Endothelial cell of umbilical vein (primary cell): ENCODE measurements at regions of chr1 and their contacts with region 1.

Region 1: GRCh38 chr1:199084293-199084692 is 445.5 kb downstream of the PTPRC start:
- DNase-seq: no peak
- H3K4me3 ChIP-seq: no peak overlapping the region
- H3K27ac ChIP-seq: no peak overlapping the region
- H3K4me1 ChIP-seq: no peaks in the 10 kb centered on the region
- H3K27me3 ChIP-seq: no peaks in the 10 kb centered on the region
- CTCF ChIP-seq: no peak
- POLR2A ChIP-seq: no peak

Region 2: DNA sequence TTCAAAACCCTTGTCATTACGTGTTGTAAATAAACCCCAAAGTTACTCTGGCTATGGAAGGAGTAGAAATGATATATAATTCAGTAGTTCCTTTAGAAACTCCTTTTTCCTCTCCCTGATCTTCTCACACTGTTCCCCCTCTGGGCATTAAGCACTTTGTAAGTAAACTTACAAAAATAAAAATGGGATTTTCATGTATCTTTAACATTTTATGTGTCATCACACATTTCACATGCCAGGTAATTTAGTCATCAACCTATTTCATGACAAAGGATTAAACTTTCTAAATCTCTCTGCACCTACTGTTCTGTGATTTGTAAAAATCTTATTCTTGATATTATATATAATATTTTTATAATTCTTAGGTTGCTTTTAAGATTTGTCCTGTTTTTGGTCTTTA is 750.5 kb before region 1 on chr1:
- CTCF ChIA-PET with region 1: no interaction called
- POLR2A ChIA-PET with region 1: no interaction called
- dilution Hi-C with region 1: no loop called
- intact Hi-C with region 1: no loop called
- DNase-seq: no peak
- H3K4me3 ChIP-seq: no peak overlapping the region
- H3K27ac ChIP-seq: no peak overlapping the region
- H3K4me1 ChIP-seq: no peaks in the 10 kb centered on the region
- H3K27me3 ChIP-seq: no peaks in the 10 kb centered on the region
- CTCF ChIP-seq: no peak
- POLR2A ChIP-seq: no peak

Region 3: GRCh38 chr1:199102239-199102638 is 17.9 kb after region 1 on chr1:
- CTCF ChIA-PET with region 1: interaction called, 3 read pairs
- POLR2A ChIA-PET with region 1: no interaction called
- dilution Hi-C with region 1: no loop called
- intact Hi-C with region 1: loop called (anchors 1 kb)
- DNase-seq: no peak
- H3K4me3 ChIP-seq: no peak overlapping the region
- H3K27ac ChIP-seq: no peak overlapping the region
- H3K4me1 ChIP-seq: no peaks in the 10 kb centered on the region
- H3K27me3 ChIP-seq: no peaks in the 10 kb centered on the region
- CTCF ChIP-seq: no peak
- POLR2A ChIP-seq: no peak